CD8-positive, alpha-beta memory T cell (primary cell): ENCODE measurements at regions of chr10 and their contacts with region 1.

Region 1: DNA sequence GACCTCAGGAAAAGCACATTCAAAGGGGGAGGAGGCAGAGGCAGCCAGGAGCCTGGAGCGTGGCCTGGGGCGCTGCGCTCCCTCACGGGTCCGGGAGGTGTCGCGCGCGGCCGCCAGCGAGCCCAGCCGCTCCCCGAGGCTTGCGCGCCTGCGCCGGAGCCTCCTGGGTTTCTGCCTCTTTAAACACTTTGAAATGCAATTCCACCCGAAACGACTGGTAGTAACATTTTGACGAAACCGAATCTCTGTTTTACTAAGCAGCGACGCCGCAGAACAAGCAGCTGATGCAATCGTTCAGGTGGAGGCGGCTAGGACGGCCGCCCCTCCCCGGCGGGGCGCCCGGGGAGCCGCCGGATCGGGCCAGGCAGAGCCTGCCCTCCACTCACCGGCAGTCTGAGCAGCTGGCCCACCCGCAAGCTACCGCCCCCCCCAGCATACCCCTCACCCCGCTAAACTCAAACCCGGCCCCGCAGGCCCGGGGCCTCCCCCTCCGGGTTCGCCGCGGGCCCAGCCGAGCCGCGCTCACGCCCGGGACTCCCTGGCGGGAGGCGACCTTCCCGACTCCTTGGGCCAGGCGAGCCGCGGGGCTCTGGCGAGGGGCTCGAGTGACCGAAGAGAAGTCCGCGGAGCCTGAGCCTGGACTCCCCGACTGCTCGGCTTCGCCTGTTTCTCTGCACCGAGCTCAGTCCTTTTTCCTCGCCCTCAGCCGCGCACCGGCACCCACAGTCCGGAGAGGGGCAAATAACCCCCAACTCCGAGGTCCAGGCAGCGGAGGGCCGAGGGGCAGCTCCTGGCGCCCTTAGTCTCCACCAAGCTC is 3.2 kb downstream of the MKX start:
- DNase-seq: peak; percentile 56 to 78 (median 74)
- H3K4me3 ChIP-seq: peak overlapping the region; percentile 69
- H3K4me3 Mint-ChIP-seq: peak overlapping the region; percentile 81 to 93 (median 88)
- H3K27ac ChIP-seq: no peak overlapping the region
- H3K27ac Mint-ChIP-seq: no peak overlapping the region
- H3K4me1 ChIP-seq: peaks cover 42% of the 10 kb centered on the region
- H3K4me1 Mint-ChIP-seq: peaks cover 24 to 52% (median 30%) of the 10 kb centered on the region in 3 donors
- H3K27me3 ChIP-seq: peaks cover 61% of the 10 kb centered on the region
- H3K27me3 Mint-ChIP-seq: peaks cover 40 to 59% of the 10 kb centered on the region in 2 donors

Region 2: DNA sequence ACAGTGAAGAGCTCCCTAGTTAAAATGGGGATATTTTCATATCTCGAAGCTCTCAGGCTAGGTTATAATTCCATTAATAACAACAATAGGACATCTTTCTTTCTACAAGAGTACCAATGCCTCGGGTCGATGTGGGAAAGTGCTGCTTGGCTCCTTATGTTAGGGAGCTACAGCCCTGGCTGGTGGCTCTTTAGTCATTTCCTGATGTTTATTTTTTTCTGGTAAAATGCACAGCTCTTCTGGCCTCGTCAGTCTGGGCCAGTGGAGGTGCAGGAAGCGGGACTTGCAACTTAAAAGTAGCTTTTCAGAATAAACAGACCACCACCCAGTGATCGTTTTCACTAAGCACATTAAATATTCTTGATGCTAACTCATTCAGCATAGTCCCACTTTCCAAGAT is 55.1 kb before region 1 on chr10:
- CTCF ChIA-PET with region 1: no interaction called
- POLR2A ChIA-PET with region 1: no interaction called
- DNase-seq: no peak
- H3K4me3 ChIP-seq: no peak overlapping the region
- H3K4me3 Mint-ChIP-seq: no peak overlapping the region
- H3K27ac ChIP-seq: no peak overlapping the region
- H3K27ac Mint-ChIP-seq: no peak overlapping the region
- H3K4me1 ChIP-seq: no peaks in the 10 kb centered on the region
- H3K4me1 Mint-ChIP-seq: no peaks in the 10 kb centered on the region
- H3K27me3 ChIP-seq: no peaks in the 10 kb centered on the region
- H3K27me3 Mint-ChIP-seq: peaks cover 7 to 43% of the 10 kb centered on the region in 2 donors

Region 3: DNA sequence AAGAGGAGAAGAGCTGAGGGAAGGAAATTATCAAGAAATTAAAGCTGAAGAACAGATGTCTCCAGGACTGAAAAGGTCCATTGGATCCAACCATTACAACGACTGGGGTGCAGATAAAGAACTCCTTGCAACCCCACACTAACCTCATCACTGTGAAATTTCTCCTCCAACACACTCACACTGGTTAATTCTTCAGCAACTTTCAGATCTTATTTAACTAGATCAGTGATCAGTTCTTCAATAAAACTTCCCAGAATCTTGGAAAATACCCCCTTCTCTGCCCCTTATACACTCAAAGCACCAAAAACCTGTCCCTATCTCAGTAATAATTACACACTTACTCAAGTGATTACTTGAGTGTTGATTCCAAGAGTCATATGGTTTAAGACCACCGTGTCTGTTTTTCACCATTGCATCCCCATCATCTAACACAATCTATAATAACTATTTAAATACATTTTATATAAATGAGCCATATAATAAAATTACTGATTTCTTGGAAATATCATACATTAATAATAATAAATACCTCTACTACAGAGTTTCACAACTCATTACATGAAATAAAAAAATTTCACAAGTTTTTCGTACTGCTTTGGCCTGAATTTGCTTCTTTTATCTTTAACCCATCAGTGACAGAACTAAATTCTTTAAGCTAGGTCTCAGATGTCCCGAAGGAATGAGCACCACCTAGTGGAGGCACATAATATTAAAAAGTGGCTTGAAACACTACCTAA is 436.8 kb after region 1 on chr10:
- CTCF ChIA-PET with region 1: interaction called, 11 read pairs
- POLR2A ChIA-PET with region 1: interaction called, 3 read pairs
- DNase-seq: peak in 3 of 5 donors; percentile 6 to 43 (median 34)
- H3K4me3 ChIP-seq: peak overlapping the region; percentile 48
- H3K4me3 Mint-ChIP-seq: peak overlapping the region; percentile 84 to 95 (median 88)
- H3K27ac ChIP-seq: no peak overlapping the region
- H3K27ac Mint-ChIP-seq: peak overlapping the region; percentile 60 to 99 (median 94)
- H3K4me1 ChIP-seq: peaks cover 25% of the 10 kb centered on the region
- H3K4me1 Mint-ChIP-seq: peaks cover 26 to 44% (median 37%) of the 10 kb centered on the region in 3 donors
- H3K27me3 ChIP-seq: no peaks in the 10 kb centered on the region
- H3K27me3 Mint-ChIP-seq: no peaks in the 10 kb centered on the region

Region 4: DNA sequence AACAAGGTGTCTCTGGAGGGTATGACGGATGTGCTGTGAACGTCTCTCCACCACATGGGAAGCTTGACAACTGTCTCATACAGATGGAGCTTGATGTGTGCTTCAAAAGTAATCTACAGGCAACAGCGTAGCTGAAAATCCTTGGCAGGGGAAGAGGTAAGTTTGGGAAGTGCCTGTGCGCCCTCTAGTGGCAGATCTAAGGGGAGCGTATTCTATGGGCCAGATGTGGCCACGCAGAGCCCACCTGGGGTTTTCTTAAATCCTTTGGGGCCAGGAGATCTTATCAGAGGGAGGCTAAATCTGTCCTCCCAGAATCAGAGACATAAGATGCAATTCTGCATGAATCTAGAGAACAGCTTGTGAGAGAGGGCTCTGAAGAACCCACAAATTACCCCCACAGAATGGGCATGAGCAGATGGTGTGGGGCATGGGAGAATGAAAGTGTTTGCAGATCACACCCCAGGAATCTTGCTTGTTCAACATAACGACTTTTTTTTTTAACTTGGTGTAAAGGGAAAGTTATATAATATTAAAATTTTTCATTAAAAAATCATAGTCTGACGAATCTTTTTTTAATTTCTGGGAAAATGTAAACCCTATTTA is 651.7 kb after region 1 on chr10:
- CTCF ChIA-PET with region 1: interaction called, 23 read pairs
- POLR2A ChIA-PET with region 1: no interaction called
- DNase-seq: peak; percentile 42 to 69 (median 48)
- H3K4me3 ChIP-seq: no peak overlapping the region
- H3K4me3 Mint-ChIP-seq: peak overlapping the region in 1 of 7 donors; percentile 11
- H3K27ac ChIP-seq: no peak overlapping the region
- H3K27ac Mint-ChIP-seq: no peak overlapping the region
- H3K4me1 ChIP-seq: no peaks in the 10 kb centered on the region
- H3K4me1 Mint-ChIP-seq: peaks cover 4 to 6% (median 5%) of the 10 kb centered on the region in 3 donors
- H3K27me3 ChIP-seq: no peaks in the 10 kb centered on the region
- H3K27me3 Mint-ChIP-seq: peaks cover 6 to 7% of the 10 kb centered on the region in 2 donors